B cell (primary cell): ENCODE measurements at regions of chr17 and their contacts with region 1.

Region 1: GRCh38 chr17:42276359-42276608 is at the start of gene STAT5B:
- DNase-seq: peak; percentile 88
- ATAC-seq: peak; percentile 84
- H3K4me3 ChIP-seq: peak within 1 kb of the TSS; percentile 73 to 86 (median 75)
- H3K4me3 Mint-ChIP-seq: peak within 1 kb of the TSS; percentile 91
- H3K27ac ChIP-seq: peak within 1 kb of the TSS; percentile 41 to 79
- H3K27ac Mint-ChIP-seq: peak within 1 kb of the TSS; percentile 88
- H3K4me1 ChIP-seq: peaks cover 37 to 40% of the 10 kb centered on the region in 2 donors
- H3K4me1 Mint-ChIP-seq: peaks cover 52% of the 10 kb centered on the region
- H3K27me3 ChIP-seq: no peaks in the 10 kb centered on the region
- H3K27me3 Mint-ChIP-seq: no peaks in the 10 kb centered on the region
- CTCF ChIP-seq: no peak
- total RNA-seq, gene STAT5B: 95.7 and 103 TPM in 2 replicates

Region 2: DNA sequence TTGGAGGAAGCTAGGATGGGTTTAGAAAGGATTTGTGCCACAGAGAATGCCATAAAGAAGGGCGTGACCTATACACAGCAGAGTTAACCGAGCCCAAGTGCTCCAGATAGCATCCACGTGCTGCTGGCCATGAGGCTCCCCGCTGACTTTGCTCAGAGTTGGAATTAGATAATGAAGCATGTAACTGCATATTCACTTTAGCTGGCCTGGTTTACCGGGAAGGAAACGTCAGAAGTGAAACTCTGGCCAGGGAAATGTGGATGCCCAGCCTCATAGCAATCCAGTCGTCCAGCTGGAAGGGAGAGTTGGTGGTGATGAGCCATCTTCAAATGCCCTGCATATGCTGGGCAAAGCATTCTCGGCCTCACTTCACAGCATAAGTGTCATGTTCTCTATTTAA is 801.4 kb before region 1 on chr17:
- CTCF ChIA-PET with region 1: no interaction called
- POLR2A ChIA-PET with region 1: no interaction called
- intact Hi-C with region 1: no loop called
- DNase-seq: no peak
- ATAC-seq: no peak
- H3K4me3 ChIP-seq: no peak overlapping the region
- H3K4me3 Mint-ChIP-seq: no peak overlapping the region
- H3K27ac ChIP-seq: no peak overlapping the region
- H3K27ac Mint-ChIP-seq: no peak overlapping the region
- H3K4me1 ChIP-seq: peaks cover 2 to 4% of the 10 kb centered on the region in 2 donors
- H3K4me1 Mint-ChIP-seq: peaks cover under 1% of the 10 kb centered on the region
- H3K27me3 ChIP-seq: no peaks in the 10 kb centered on the region
- H3K27me3 Mint-ChIP-seq: peaks cover 7% of the 10 kb centered on the region
- CTCF ChIP-seq: no peak

Region 3: GRCh38 chr17:42221937-42222745 is 54.1 kb before region 1 on chr17:
- CTCF ChIA-PET with region 1: interaction called, 10 read pairs
- POLR2A ChIA-PET with region 1: interaction called, 4 read pairs
- intact Hi-C with region 1: loop called (anchors 10 kb)
- DNase-seq: peak; percentile 65
- ATAC-seq: peak; percentile 64
- H3K4me3 ChIP-seq: no peak overlapping the region
- H3K4me3 Mint-ChIP-seq: no peak overlapping the region
- H3K27ac ChIP-seq: no peak overlapping the region
- H3K27ac Mint-ChIP-seq: no peak overlapping the region
- H3K4me1 ChIP-seq: no peaks in the 10 kb centered on the region
- H3K4me1 Mint-ChIP-seq: no peaks in the 10 kb centered on the region
- H3K27me3 ChIP-seq: no peaks in the 10 kb centered on the region
- H3K27me3 Mint-ChIP-seq: no peaks in the 10 kb centered on the region
- CTCF ChIP-seq: peak; percentile 66

Region 4: DNA sequence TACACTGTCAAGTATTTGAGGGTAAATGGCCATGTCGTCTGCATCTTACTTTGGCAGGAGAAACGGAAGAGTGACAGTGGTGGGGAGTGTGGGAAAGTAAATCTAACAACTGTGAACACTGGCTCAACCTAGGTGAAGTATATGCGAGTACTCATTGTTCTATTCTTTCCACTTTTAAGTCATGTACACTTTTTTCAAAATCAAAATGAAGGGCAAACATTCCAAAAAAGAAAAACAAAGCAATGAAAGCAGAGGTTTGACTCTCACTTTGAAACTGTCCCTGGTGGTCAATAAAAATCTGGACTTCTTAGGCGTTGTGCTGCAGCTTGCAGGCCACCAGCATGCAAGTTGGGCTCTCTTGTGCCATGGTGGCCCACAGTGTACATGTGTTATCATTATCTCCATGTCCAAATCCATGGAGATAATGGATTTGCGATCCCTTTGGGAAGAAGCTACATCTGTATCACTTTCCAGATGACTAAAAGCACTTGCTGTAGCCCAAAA is 32.7 kb before region 1 on chr17:
- CTCF ChIA-PET with region 1: interaction called, 21 read pairs
- POLR2A ChIA-PET with region 1: interaction called, 11 read pairs
- intact Hi-C with region 1: loop called (anchors 1 kb)
- DNase-seq: no peak
- ATAC-seq: no peak
- H3K4me3 ChIP-seq: no peak overlapping the region
- H3K4me3 Mint-ChIP-seq: no peak overlapping the region
- H3K27ac ChIP-seq: no peak overlapping the region
- H3K27ac Mint-ChIP-seq: peak overlapping the region; percentile 59
- H3K4me1 ChIP-seq: peaks cover 10 to 14% of the 10 kb centered on the region in 2 donors
- H3K4me1 Mint-ChIP-seq: peaks cover 32% of the 10 kb centered on the region
- H3K27me3 ChIP-seq: no peaks in the 10 kb centered on the region
- H3K27me3 Mint-ChIP-seq: no peaks in the 10 kb centered on the region
- CTCF ChIP-seq: no peak

Region 5: DNA sequence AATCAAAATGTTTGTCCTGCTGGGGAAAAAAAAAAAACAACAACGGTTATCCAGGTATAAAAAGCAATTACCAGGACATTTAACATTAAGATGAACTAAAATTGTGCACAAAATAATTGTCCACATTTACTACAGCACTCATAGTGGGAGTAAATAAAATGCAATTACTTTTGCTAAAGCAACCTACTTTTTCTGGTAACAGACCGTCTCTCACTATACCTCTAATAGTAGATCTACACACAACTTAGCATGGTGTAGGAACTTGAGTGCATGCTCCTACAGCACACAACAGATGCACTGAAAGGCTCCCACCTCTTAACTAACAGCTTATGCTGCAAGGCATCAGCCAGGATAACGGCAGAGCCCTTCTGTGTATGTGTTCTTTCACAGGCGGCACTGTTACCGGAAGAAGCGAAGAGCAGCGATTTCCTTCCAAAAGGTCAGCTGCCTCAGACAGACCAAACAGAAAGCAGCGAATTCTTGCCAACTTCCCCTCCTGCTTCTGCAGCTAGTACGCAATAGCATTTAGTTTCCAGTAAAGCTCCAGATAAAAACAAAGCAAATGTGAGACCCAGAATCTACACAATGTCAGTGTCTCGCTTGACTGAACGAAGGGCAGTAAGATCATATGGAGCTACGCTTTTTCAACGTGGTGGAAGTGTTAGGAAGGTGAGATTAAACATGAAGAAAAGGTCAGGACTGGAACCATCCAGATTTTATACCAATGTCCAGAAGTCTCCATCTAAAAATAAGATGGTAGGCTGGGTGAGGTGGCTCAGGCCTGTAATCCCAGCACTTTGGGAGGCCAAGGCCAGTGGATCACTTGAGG is 27.7 kb before region 1 on chr17:
- CTCF ChIA-PET with region 1: interaction called, 21 read pairs
- POLR2A ChIA-PET with region 1: interaction called, 11 read pairs
- intact Hi-C with region 1: loop called (anchors 1 kb)
- DNase-seq: peak; percentile 87
- ATAC-seq: peak; percentile 97
- H3K4me3 ChIP-seq: peak overlapping the region; percentile 39 to 86 (median 61)
- H3K4me3 Mint-ChIP-seq: peak overlapping the region; percentile 88
- H3K27ac ChIP-seq: peak overlapping the region; percentile 84 to 93
- H3K27ac Mint-ChIP-seq: peak overlapping the region; percentile 95
- H3K4me1 ChIP-seq: peaks cover 20 to 24% of the 10 kb centered on the region in 2 donors
- H3K4me1 Mint-ChIP-seq: peaks cover 47% of the 10 kb centered on the region
- H3K27me3 ChIP-seq: no peaks in the 10 kb centered on the region
- H3K27me3 Mint-ChIP-seq: no peaks in the 10 kb centered on the region
- CTCF ChIP-seq: no peak